CD4-positive, alpha-beta T cell (primary cell): ENCODE measurements at regions of chr20 and their contacts with region 1.

Region 1: GRCh38 chr20:47438577-47439381 is 62.9 kb upstream of the NCOA3 start:
- DNase-seq: peak in 3 of 14 experiments; percentile 27 to 70 (median 56)
- ATAC-seq: no peak
- H3K4me3 ChIP-seq: no peak overlapping the region
- H3K4me3 Mint-ChIP-seq: no peak overlapping the region
- H3K27ac ChIP-seq: no peak overlapping the region
- H3K27ac Mint-ChIP-seq: no peak overlapping the region
- H3K4me1 ChIP-seq: peaks cover 5% of the 10 kb centered on the region
- H3K4me1 Mint-ChIP-seq: no peaks in the 10 kb centered on the region
- H3K27me3 ChIP-seq: no peaks in the 10 kb centered on the region
- H3K27me3 Mint-ChIP-seq: no peaks in the 10 kb centered on the region
- CTCF ChIP-seq: no peak

Region 2: DNA sequence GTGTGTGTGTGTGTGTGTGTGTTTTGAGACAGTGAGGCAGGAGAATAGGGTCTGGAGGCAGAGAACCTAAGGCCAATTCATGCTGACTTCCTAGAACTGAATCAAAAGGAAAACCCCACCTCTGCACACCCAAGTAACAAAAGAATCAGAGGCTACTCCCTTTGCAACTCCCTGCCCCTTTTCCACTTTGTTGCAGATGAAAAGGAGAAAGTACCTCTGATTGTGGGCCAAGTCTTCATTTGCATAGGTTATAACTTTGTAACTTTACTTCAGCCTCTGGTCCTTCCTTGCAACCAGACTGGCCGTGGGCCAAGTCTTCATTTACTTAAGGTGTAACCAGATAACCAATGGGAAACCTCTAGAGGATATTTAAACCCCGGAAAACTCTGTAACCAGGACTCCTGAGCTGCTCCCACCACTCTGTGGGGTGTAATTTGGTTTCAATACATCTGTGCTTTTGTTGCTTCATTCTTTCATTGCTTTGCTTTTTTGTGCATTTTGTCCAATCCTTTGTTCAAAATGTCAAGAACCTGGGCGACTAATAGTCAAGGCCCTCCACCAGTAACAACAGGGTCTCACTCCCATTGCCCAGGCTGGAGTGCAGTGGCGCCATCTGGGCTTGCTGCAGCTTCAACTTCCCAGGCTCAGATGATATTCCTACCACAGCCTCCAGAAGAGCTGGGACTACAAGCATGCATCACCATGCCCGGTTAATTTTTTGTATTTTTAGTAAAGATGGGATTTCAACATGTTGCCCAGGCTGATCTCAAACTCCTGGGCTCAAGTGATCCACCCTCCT is 375.2 kb before region 1 on chr20:
- CTCF ChIA-PET with region 1: no interaction called
- POLR2A ChIA-PET with region 1: no interaction called
- intact Hi-C with region 1: no loop called
- DNase-seq: no peak
- ATAC-seq: no peak
- H3K4me3 ChIP-seq: no peak overlapping the region
- H3K4me3 Mint-ChIP-seq: no peak overlapping the region
- H3K27ac ChIP-seq: no peak overlapping the region
- H3K27ac Mint-ChIP-seq: no peak overlapping the region
- H3K4me1 ChIP-seq: no peaks in the 10 kb centered on the region
- H3K4me1 Mint-ChIP-seq: no peaks in the 10 kb centered on the region
- H3K27me3 ChIP-seq: peaks cover 0 to 6% of the 10 kb centered on the region in 2 experiments
- H3K27me3 Mint-ChIP-seq: peaks cover 17% of the 10 kb centered on the region
- CTCF ChIP-seq: no peak

Region 3: GRCh38 chr20:47397652-47398301 is 41.0 kb before region 1 on chr20:
- CTCF ChIA-PET with region 1: no interaction called
- POLR2A ChIA-PET with region 1: no interaction called
- intact Hi-C with region 1: loop called in 1 of 2 experiments (anchors 5 kb)
- DNase-seq: no peak
- ATAC-seq: no peak
- H3K4me3 ChIP-seq: no peak overlapping the region
- H3K4me3 Mint-ChIP-seq: no peak overlapping the region
- H3K27ac ChIP-seq: no peak overlapping the region
- H3K27ac Mint-ChIP-seq: no peak overlapping the region
- H3K4me1 ChIP-seq: no peaks in the 10 kb centered on the region
- H3K4me1 Mint-ChIP-seq: peaks cover 4% of the 10 kb centered on the region
- H3K27me3 ChIP-seq: no peaks in the 10 kb centered on the region
- H3K27me3 Mint-ChIP-seq: no peaks in the 10 kb centered on the region
- CTCF ChIP-seq: no peak

Region 4: DNA sequence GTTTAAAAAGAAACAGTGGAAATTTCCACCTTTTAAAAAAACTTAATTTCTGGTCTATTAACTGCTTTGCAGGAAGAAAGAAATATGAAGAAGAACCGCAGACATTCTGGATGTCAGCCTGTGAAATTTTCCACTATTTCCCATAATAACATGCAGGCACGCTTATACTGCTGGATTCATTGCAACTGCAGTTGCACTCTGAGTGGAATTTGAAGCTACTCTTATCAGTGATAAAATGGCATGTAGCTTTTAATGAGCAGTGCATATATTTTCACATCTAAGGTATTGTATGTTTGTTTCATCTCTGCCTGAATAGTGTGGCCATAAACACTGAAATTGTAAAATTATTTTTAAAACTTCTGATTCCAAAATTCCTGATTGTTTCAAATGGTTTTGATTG is 91.1 kb after region 1 on chr20:
- CTCF ChIA-PET with region 1: no interaction called
- POLR2A ChIA-PET with region 1: no interaction called
- intact Hi-C with region 1: no loop called
- DNase-seq: no peak
- ATAC-seq: no peak
- H3K4me3 ChIP-seq: no peak overlapping the region
- H3K4me3 Mint-ChIP-seq: no peak overlapping the region
- H3K27ac ChIP-seq: no peak overlapping the region
- H3K27ac Mint-ChIP-seq: peak overlapping the region; percentile 42
- H3K4me1 ChIP-seq: peaks cover 10% of the 10 kb centered on the region
- H3K4me1 Mint-ChIP-seq: peaks cover 50% of the 10 kb centered on the region
- H3K27me3 ChIP-seq: no peaks in the 10 kb centered on the region
- H3K27me3 Mint-ChIP-seq: no peaks in the 10 kb centered on the region
- CTCF ChIP-seq: no peak

Region 5: GRCh38 chr20:47648943-47649342 is 210.2 kb after region 1 on chr20:
- CTCF ChIA-PET with region 1: no interaction called
- POLR2A ChIA-PET with region 1: no interaction called
- intact Hi-C with region 1: no loop called
- DNase-seq: no peak
- ATAC-seq: no peak
- H3K4me3 ChIP-seq: no peak overlapping the region
- H3K4me3 Mint-ChIP-seq: no peak overlapping the region
- H3K27ac ChIP-seq: no peak overlapping the region
- H3K27ac Mint-ChIP-seq: no peak overlapping the region
- H3K4me1 ChIP-seq: no peaks in the 10 kb centered on the region
- H3K4me1 Mint-ChIP-seq: no peaks in the 10 kb centered on the region
- H3K27me3 ChIP-seq: no peaks in the 10 kb centered on the region
- H3K27me3 Mint-ChIP-seq: no peaks in the 10 kb centered on the region
- CTCF ChIP-seq: no peak